Lower leg skin (tissue), 4 donors: ENCODE measurements at regions of chr5 and their contacts with region 1.

Region 1: GRCh38 chr5:160467555-160468362 is 46.1 kb downstream of the PTTG1 start:
- DNase-seq: peak; percentile 75 to 92
- H3K4me3 ChIP-seq: no peak overlapping the region
- CTCF ChIP-seq: no peak
- POLR2A ChIP-seq: no peak

Region 2: DNA sequence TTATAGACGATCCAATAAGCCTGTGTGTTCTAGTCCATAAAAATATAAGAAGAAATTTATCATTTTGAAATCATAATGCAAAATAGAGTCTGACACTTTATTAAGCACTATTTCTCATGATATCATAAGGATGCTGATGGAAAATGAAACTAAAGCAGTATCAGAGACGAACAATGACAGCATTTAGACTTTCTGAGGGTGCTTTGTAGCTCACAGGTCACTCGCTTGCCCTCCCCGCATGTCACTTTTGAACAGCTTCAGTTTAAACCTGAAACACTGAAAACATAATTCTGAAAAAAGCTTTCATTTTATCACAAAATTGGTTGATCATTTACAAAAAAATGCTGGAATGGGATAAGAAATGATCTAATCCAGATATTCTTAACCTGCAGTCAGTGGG is 1615.1 kb before region 1 on chr5:
- intact Hi-C with region 1: loop called (anchors 10 kb)
- DNase-seq: no peak
- H3K4me3 ChIP-seq: no peak overlapping the region
- CTCF ChIP-seq: no peak
- POLR2A ChIP-seq: no peak

Region 3: DNA sequence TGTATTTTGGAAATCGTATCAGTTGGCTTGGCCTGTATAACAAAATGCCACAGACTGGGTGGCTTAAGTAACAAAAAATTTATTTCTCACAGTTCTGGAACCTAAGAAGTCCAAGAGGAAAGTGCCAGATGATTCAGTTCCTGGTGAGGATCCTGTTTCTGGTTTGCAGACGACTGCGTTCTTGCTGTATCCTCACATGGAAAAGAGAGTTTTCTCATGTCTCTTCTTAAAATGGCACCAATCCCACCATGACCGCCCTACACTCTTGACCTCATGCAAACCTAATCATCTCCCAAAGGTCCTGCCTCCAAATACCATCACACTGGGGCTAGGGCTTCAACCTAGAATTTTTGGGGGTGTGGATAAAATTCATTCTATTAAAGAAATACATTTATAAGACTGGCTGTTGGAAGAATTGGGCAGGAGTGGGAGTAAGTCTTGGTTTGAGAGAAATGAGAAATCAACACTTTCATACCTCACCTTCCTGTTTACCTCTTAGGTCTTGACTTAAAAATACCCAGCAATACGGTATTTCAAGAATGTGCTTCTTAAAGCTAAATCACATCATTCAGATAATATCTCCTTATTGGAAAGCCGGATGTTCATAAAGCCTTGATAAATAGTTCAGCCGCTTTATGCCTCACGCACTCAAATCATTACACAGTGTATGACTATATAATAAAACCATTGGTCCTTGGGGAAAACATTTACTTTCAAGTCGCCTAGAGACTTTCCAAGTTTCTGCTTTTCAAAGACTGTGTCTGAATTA is 17.4 kb before region 1 on chr5:
- intact Hi-C with region 1: no loop called
- DNase-seq: no peak
- H3K4me3 ChIP-seq: no peak overlapping the region
- CTCF ChIP-seq: no peak
- POLR2A ChIP-seq: no peak

Region 4: GRCh38 chr5:160627921-160628618 is 160.3 kb after region 1 on chr5:
- intact Hi-C with region 1: no loop called
- DNase-seq: no peak
- H3K4me3 ChIP-seq: no peak overlapping the region
- CTCF ChIP-seq: no peak
- POLR2A ChIP-seq: no peak

Region 5: DNA sequence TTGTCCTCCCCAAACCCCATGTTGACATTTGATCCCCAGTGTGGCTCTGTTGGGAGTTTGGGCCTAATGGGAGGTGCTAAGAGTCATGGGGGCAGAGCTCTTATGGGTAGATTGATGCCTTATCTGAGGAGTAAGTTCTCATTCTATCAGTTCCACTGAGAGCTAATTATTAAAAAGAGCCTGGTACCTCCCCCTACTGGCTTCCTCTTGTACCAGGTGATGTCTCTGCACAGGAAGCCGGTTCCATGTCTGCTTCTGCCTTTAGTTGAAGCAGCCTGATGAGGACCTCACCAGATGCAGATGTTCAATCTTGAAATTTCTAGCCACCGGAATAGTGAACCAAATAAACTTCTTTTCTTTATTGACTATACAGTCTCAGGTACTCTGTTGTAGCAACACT is 1068.0 kb after region 1 on chr5:
- intact Hi-C with region 1: no loop called
- DNase-seq: no peak
- H3K4me3 ChIP-seq: no peak overlapping the region
- CTCF ChIP-seq: no peak
- POLR2A ChIP-seq: no peak